Activated CD4-positive, alpha-beta T cell treated with anti-CD3 and anti-CD28 coated beads for 36 hours (primary cell): ENCODE measurements at regions of chr10 and their contacts with region 1.

Region 1: GRCh38 chr10:50624866-50625692 is 1.3 kb upstream of the SGMS1 start:
- DNase-seq: peak; percentile 76
- ATAC-seq: peak; percentile 30
- H3K4me3 Mint-ChIP-seq: peak overlapping the region; percentile 78
- H3K27ac Mint-ChIP-seq: peak overlapping the region; percentile 94
- H3K4me1 Mint-ChIP-seq: peaks cover 39% of the 10 kb centered on the region
- H3K27me3 Mint-ChIP-seq: no peaks in the 10 kb centered on the region

Region 2: GRCh38 chr10:50417886-50418830 is 206.9 kb before region 1 on chr10:
- CTCF ChIA-PET with region 1: interaction called, 5 read pairs
- POLR2A ChIA-PET with region 1: interaction called, 3 read pairs
- intact Hi-C with region 1: loop called in 1 of 2 experiments (anchors 1 kb)
- DNase-seq: peak; percentile 66
- ATAC-seq: peak; percentile 91
- H3K4me3 Mint-ChIP-seq: peak overlapping the region; percentile 76
- H3K27ac Mint-ChIP-seq: peak overlapping the region; percentile 64
- H3K4me1 Mint-ChIP-seq: peaks cover 41% of the 10 kb centered on the region
- H3K27me3 Mint-ChIP-seq: no peaks in the 10 kb centered on the region

Region 3: GRCh38 chr10:50508315-50509051 is 116.6 kb before region 1 on chr10:
- CTCF ChIA-PET with region 1: interaction called, 3 read pairs
- POLR2A ChIA-PET with region 1: interaction called, 3 read pairs
- intact Hi-C with region 1: loop called in 1 of 2 experiments (anchors 5 kb)
- DNase-seq: peak; percentile 61
- ATAC-seq: peak; percentile 56
- H3K4me3 Mint-ChIP-seq: no peak overlapping the region
- H3K27ac Mint-ChIP-seq: no peak overlapping the region
- H3K4me1 Mint-ChIP-seq: peaks cover 68% of the 10 kb centered on the region
- H3K27me3 Mint-ChIP-seq: peaks cover 3% of the 10 kb centered on the region

Region 4: DNA sequence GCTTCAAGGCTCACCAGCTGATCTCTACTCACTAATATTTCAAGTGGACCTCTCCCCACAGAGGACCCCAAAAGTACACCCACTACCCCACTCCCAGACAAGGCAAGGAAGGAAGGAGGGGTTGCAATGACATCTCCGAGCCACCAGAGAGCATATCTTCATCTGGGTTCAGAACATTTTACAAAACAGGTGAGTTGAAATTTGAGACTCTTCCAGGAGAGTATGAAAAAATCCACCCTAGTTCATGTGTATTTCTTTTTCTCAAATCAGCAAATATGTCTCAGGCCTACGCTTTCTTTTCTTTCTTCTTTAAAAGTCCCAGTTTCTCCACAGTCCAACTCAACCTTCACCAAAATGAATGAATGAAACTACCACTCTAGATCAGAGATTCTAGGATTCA is 63.3 kb before region 1 on chr10:
- CTCF ChIA-PET with region 1: interaction called, 6 read pairs
- POLR2A ChIA-PET with region 1: interaction called, 5 read pairs
- intact Hi-C with region 1: loop called in 1 of 2 experiments (anchors 2 kb)
- DNase-seq: no peak
- ATAC-seq: no peak
- H3K4me3 Mint-ChIP-seq: no peak overlapping the region
- H3K27ac Mint-ChIP-seq: no peak overlapping the region
- H3K4me1 Mint-ChIP-seq: peaks cover 8% of the 10 kb centered on the region
- H3K27me3 Mint-ChIP-seq: no peaks in the 10 kb centered on the region

Region 5: DNA sequence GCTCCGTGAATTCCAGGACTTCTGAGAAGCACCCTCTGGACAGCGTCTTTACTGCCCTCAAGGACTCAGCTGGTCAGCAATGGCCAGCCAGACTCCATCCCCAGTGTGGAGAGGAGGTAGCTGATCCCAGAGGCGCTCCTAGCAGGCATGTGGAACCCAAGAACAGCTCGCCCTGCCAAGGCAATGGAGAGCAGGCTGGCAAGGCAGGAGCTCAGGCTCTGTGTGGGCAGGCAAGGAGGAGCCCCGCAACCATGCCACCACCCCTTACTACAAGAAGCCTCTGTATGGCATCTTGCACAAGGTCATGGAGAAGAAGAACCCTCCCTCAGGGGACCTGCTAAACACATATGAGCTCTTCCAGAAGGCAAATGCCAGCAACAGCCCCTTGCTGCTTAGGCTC is 33.1 kb after region 1 on chr10:
- CTCF ChIA-PET with region 1: interaction called, 6 read pairs
- POLR2A ChIA-PET with region 1: no interaction called
- intact Hi-C with region 1: loop called in 1 of 2 experiments (anchors 1 kb)
- DNase-seq: no peak
- ATAC-seq: no peak
- H3K4me3 Mint-ChIP-seq: peak overlapping the region; percentile 15
- H3K27ac Mint-ChIP-seq: no peak overlapping the region
- H3K4me1 Mint-ChIP-seq: peaks cover 29% of the 10 kb centered on the region
- H3K27me3 Mint-ChIP-seq: no peaks in the 10 kb centered on the region

Region 6: DNA sequence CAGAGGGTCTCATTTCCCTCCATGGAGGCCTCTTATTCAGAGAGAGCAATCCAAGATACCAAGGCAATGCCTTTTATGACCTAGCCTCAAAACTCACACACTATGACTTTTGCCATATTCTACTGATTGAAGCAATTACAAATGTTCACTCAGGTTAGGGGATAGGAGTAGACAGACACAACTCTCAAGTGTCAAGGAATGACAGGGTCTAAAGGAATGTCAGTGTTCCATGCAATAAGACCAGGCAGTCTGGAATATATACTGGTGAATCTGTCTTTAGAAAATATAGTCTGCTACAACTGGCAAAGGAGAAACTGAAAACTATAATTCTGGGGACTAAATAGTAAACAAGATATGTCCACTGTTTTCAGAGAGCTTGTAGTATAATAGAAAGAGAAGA is 733.1 kb after region 1 on chr10:
- CTCF ChIA-PET with region 1: no interaction called
- POLR2A ChIA-PET with region 1: no interaction called
- intact Hi-C with region 1: no loop called
- DNase-seq: no peak
- ATAC-seq: no peak
- H3K4me3 Mint-ChIP-seq: no peak overlapping the region
- H3K27ac Mint-ChIP-seq: no peak overlapping the region
- H3K4me1 Mint-ChIP-seq: no peaks in the 10 kb centered on the region
- H3K27me3 Mint-ChIP-seq: no peaks in the 10 kb centered on the region

Region 7: DNA sequence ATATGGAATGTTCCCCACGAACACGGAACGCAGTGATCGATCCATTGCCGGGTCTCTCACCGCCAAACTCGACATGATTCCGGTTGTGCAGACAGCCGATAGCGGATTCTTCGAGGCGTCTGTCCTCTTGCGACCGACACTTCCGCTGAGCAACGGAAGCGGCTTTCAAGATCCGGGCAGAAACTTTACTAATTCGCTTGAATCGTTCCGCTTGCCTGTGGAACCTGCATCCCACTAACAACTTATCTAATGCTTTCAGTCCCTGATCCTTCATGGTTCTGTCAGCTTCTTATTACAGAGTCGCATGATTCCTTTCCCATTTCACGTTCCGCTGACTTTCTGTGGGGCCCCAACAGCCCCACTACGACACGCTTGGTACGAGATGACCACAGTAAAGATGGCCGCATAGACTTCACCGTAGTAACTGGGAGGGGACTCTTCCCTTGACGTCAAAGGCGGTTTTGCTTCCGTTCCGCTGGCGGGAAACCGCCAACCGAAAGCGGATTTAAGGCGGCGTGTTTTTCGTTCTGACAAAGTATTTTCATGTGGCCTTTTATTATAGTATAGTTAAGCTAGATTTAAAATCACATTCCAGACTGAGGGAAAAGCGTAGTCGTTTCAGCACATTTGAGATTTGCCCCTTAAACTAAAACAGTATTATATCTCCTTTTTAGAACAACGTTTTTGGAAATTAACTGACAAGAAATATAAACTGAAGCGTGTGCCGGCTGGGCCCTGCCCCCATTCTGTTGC is 1074.6 kb after region 1 on chr10 and contains the start of gene CSTF2T:
- CTCF ChIA-PET with region 1: no interaction called
- POLR2A ChIA-PET with region 1: interaction called, 4 read pairs
- intact Hi-C with region 1: loop called in 1 of 2 experiments (anchors 1 kb)
- DNase-seq: peak; percentile 93
- ATAC-seq: peak; percentile 89
- H3K4me3 Mint-ChIP-seq: peak within 1 kb of the TSS; percentile 96
- H3K27ac Mint-ChIP-seq: peak within 1 kb of the TSS; percentile 100
- H3K4me1 Mint-ChIP-seq: peaks cover 51% of the 10 kb centered on the region
- H3K27me3 Mint-ChIP-seq: no peaks in the 10 kb centered on the region
- total RNA-seq, gene CSTF2T: 24.5 to 27.6 TPM